K562 (cell line): ENCODE measurements at regions of chr4 and their contacts with region 1.

Region 1: GRCh38 chr4:118835571-118836300 is at the start of gene SEC24D:
- DNase-seq: peak; percentile 91 to 99 (median 98)
- ATAC-seq: peak; percentile 94
- H3K4me3 ChIP-seq: peak within 1 kb of the TSS; percentile 92
- H3K27ac ChIP-seq: peak within 1 kb of the TSS; percentile 79
- H3K4me1 ChIP-seq: peaks cover 4 to 8% of the 10 kb centered on the region in 2 experiments; a peak in 4 of 5 replicates
- H3K27me3 ChIP-seq: no peaks in the 10 kb centered on the region; a peak in 1 of 5 replicates
- CTCF ChIP-seq: no peak
- EP300 ChIP-seq: no peak
- POLR2A ChIP-seq: peak; percentile 51; the same call in 1 of the 2 replicates
- RAD21 ChIP-seq: no peak
- polyA plus RNA-seq, gene SEC24D: 7.1 to 8.1 TPM

Region 2: GRCh38 chr4:118746292-118746919 is 89.3 kb before region 1 on chr4:
- CTCF ChIA-PET with region 1: no interaction called
- POLR2A ChIA-PET with region 1: no interaction called
- in situ Hi-C with region 1: no loop called
- intact Hi-C with region 1: no loop called
- DNase-seq: no peak
- ATAC-seq: no peak
- H3K4me3 ChIP-seq: no peak overlapping the region
- H3K27ac ChIP-seq: no peak overlapping the region
- H3K4me1 ChIP-seq: no peaks in the 10 kb centered on the region; a peak in 1 of 5 replicates
- H3K27me3 ChIP-seq: no peaks in the 10 kb centered on the region
- CTCF ChIP-seq: no peak
- EP300 ChIP-seq: no peak
- POLR2A ChIP-seq: no peak
- RAD21 ChIP-seq: no peak

Region 3: GRCh38 chr4:118846979-118847378 is 11.2 kb after region 1 on chr4:
- CTCF ChIA-PET with region 1: no interaction called
- POLR2A ChIA-PET with region 1: interaction called, 11 read pairs
- in situ Hi-C with region 1: no loop called
- intact Hi-C with region 1: no loop called
- DNase-seq: no peak
- ATAC-seq: no peak
- H3K4me3 ChIP-seq: no peak overlapping the region
- H3K27ac ChIP-seq: no peak overlapping the region
- H3K4me1 ChIP-seq: no peaks in the 10 kb centered on the region; a peak in 1 of 5 replicates
- H3K27me3 ChIP-seq: no peaks in the 10 kb centered on the region; a peak in 2 of 5 replicates
- CTCF ChIP-seq: no peak
- EP300 ChIP-seq: no peak
- POLR2A ChIP-seq: no peak
- RAD21 ChIP-seq: no peak